Heart left ventricle (tissue), 16 donors: ENCODE measurements at regions of chr18 and their contacts with region 1.

Region 1: GRCh38 chr18:13330996-13331395 is 112.4 kb downstream of the LDLRAD4 start:
- DNase-seq: no peak
- ATAC-seq: no peak
- H3K4me3 ChIP-seq: no peak overlapping the region
- H3K27ac ChIP-seq: no peak overlapping the region
- H3K4me1 ChIP-seq: peaks cover 0 to 4% (median 0%) of the 10 kb centered on the region in 12 donors
- H3K27me3 ChIP-seq: no peaks in the 10 kb centered on the region
- CTCF ChIP-seq: no peak
- POLR2A ChIP-seq: no peak

Region 2: DNA sequence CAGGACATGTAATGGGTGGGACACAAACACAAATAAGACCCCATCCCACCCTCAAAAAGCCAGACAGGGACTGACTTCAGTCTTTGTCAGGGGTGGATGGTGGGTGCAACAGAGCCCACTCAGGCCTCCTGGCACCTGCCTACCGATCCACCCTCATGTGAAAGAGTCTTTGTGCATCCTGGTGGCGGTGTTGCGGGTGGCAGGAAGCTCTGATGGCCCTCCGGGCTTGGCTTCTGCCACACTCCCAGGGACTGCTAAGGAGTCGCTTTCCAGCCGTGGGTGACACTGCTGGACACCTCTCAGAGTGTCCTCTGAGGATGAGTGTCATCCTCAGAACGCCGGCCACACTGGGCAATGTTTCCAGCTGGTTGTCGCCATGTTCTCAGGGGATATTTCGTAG is 19.8 kb before region 1 on chr18:
- intact Hi-C with region 1: loop called in 1 of 10 experiments (anchors 1 kb)
- DNase-seq: no peak
- ATAC-seq: no peak
- H3K4me3 ChIP-seq: no peak overlapping the region
- H3K27ac ChIP-seq: no peak overlapping the region
- H3K4me1 ChIP-seq: peaks cover 0 to 9% (median 4%) of the 10 kb centered on the region in 12 donors
- H3K27me3 ChIP-seq: no peaks in the 10 kb centered on the region
- CTCF ChIP-seq: no peak
- POLR2A ChIP-seq: no peak